Activated CD8-positive, alpha-beta T cell treated with anti-CD3 and anti-CD28 coated beads, Interleukin-2, amount 10 ng/mL, durations not matched to agents 7 days and 5 days (primary cell): ENCODE measurements at regions of chr3 and their contacts with region 1.

Region 1: DNA sequence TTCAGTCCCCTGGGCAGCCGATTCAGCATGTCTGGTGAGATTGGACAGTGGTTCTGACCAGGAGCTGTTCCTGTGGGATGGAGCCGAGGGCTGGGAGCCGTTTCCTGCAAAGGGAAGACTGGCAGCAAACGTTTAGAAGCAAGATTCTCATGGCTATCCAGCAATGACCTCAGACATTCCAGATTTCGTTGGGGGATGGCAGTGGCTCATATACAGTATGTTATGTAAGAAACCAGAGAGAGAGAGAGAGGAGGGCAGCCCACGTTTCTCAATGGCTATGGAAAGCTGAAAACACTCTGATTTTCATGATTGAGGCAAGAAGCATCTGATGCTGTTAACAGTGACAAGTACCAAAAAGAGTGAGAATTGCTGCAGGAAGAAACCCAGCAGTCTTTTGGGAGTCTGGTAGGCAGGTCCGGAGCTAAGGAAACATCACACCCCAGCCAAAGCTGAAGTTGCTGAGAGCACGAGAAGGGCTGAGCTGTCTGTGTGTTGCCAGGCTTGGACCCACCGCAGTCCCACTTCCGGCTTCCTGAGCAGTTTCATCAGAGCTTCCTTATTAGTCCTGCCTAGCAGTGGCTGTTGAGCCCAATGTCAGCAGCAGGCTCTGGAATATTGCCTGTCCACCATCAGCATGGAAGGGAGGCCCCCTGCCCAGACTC is 25.6 kb upstream of the VPS8 start:
- DNase-seq: peak; percentile 65
- ATAC-seq: peak; percentile 86
- H3K4me3 Mint-ChIP-seq: no peak overlapping the region
- H3K27ac Mint-ChIP-seq: peak overlapping the region; percentile 11
- H3K4me1 Mint-ChIP-seq: peaks cover 28% of the 10 kb centered on the region
- H3K27me3 Mint-ChIP-seq: peaks cover 6% of the 10 kb centered on the region

Region 2: GRCh38 chr3:184800349-184800930 is 14.0 kb after region 1 on chr3:
- CTCF ChIA-PET with region 1: interaction called, 39 read pairs
- POLR2A ChIA-PET with region 1: no interaction called
- DNase-seq: no peak
- ATAC-seq: no peak
- H3K4me3 Mint-ChIP-seq: no peak overlapping the region
- H3K27ac Mint-ChIP-seq: no peak overlapping the region
- H3K4me1 Mint-ChIP-seq: peaks cover 4% of the 10 kb centered on the region
- H3K27me3 Mint-ChIP-seq: peaks cover 36% of the 10 kb centered on the region